OCI-LY7 (cell line): ENCODE measurements at regions of chr9 and their contacts with region 1.

Region 1: GRCh38 chr9:78296893-78297671 is at the start of gene PSAT1:
- DNase-seq: peak; percentile 98
- H3K4me3 ChIP-seq: peak within 1 kb of the TSS; percentile 85
- H3K27ac ChIP-seq: peak within 1 kb of the TSS; percentile 84
- H3K4me1 ChIP-seq: peaks cover 22% of the 10 kb centered on the region
- CTCF ChIP-seq: peak; percentile 34; the same call in 1 of the 2 replicates
- total RNA-seq, gene PSAT1: 116 and 125 TPM in 2 replicates

Region 2: GRCh38 chr9:77177161-77177893 is 1119.8 kb before region 1 on chr9 and contains the start of gene VPS13A:
- CTCF ChIA-PET with region 1: no interaction called
- POLR2A ChIA-PET with region 1: no interaction called
- intact Hi-C with region 1: loop called (anchors 5 kb)
- DNase-seq: peak; percentile 93
- H3K4me3 ChIP-seq: peak within 1 kb of the TSS; percentile 86
- H3K27ac ChIP-seq: peak within 1 kb of the TSS; percentile 58
- H3K4me1 ChIP-seq: peaks cover 27% of the 10 kb centered on the region
- CTCF ChIP-seq: peak; percentile 42; the same call in 1 of the 2 replicates
- total RNA-seq, gene VPS13A: 22.8 and 27.0 TPM in 2 replicates

Region 3: GRCh38 chr9:78261403-78262001 is 35.6 kb before region 1 on chr9:
- CTCF ChIA-PET with region 1: no interaction called
- POLR2A ChIA-PET with region 1: interaction called, 5 read pairs
- intact Hi-C with region 1: loop called (anchors 5 kb)
- DNase-seq: peak; percentile 54
- H3K4me3 ChIP-seq: no peak overlapping the region
- H3K27ac ChIP-seq: no peak overlapping the region
- H3K4me1 ChIP-seq: no peaks in the 10 kb centered on the region
- CTCF ChIP-seq: peak; percentile 91

Region 4: GRCh38 chr9:78278177-78278777 is 18.8 kb before region 1 on chr9:
- CTCF ChIA-PET with region 1: no interaction called
- POLR2A ChIA-PET with region 1: interaction called, 12 read pairs
- intact Hi-C with region 1: no loop called
- DNase-seq: no peak
- H3K4me3 ChIP-seq: no peak overlapping the region
- H3K27ac ChIP-seq: no peak overlapping the region
- H3K4me1 ChIP-seq: no peaks in the 10 kb centered on the region
- CTCF ChIP-seq: no peak

Region 5: DNA sequence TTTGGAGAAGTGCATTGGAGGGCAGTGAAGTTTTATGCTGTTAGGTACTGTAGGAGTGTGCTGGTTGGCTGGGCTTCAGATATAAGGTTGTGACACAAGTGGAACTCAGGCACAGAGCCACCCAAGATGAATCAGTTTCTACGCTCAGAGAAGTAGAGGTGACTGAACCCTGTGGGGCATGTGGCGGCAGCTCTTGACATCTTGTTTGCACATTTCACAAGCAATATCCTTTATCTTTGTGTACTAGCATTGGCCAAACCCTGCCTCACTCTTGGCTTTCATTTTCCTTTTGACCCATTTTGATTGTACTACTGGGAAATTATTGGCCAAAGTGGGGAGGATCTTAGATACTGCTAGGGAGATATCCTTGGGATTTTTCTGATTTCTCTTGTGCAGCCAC is 109.9 kb after region 1 on chr9:
- CTCF ChIA-PET with region 1: no interaction called
- POLR2A ChIA-PET with region 1: no interaction called
- intact Hi-C with region 1: no loop called
- DNase-seq: no peak
- H3K4me3 ChIP-seq: no peak overlapping the region
- H3K27ac ChIP-seq: no peak overlapping the region
- H3K4me1 ChIP-seq: no peaks in the 10 kb centered on the region
- CTCF ChIP-seq: no peak